ENCODE measurements at regions of chr4 and their contacts with region 1.

Region 1: GRCh38 chr4:15956179-15956850 is 6.7 kb downstream of the FGFBP2 start:
- DNase-seq: peak; percentile 5
- H3K4me3 ChIP-seq: no peak overlapping the region
- CTCF ChIP-seq: peak; percentile 94

Region 2: DNA sequence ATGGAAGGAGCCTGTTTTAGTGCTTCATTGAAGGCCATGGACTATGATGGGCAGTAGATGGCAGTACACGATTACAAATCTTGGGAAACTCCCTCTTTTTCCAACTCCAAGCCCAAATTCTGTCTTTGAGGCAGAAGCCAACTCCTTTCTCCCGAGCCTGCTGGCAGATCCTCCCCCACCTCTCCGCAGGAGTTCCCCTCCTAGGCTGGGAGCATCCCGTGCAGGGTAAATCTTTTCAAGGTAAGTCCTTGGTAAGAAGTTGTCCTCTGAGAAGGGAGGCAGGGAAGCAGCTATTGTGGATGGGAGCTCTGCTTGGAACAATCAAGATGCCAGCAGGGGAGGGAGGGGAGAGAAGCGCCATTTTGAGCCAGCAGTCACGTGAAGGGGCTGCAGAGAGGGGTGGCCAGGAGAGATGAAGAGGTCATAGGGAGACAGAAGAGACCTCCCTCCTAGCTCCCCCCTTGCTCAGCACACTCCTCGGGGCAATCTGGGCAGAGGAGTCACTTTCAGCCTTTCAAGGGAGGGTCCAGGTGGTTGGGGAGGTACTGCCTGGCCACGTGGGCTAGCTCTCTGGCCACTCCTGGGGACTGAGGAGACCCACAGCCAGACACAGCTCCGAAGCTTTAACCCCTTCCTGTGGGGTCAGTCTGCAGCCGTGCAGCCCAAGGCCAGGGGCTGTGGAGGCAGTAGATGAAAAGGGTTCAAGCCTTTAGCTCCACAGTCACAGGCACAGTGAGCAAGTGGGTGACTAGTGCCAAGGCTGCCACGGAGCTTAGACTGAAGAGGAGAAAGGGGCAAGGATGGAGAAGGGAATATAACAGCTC is 477.0 kb before region 1 on chr4:
- CTCF ChIA-PET with region 1: interaction called, 44 read pairs
- POLR2A ChIA-PET with region 1: interaction called, 3 read pairs
- DNase-seq: peak; percentile 42
- H3K4me3 ChIP-seq: peak overlapping the region; percentile 68
- CTCF ChIP-seq: peak; percentile 67

Region 3: DNA sequence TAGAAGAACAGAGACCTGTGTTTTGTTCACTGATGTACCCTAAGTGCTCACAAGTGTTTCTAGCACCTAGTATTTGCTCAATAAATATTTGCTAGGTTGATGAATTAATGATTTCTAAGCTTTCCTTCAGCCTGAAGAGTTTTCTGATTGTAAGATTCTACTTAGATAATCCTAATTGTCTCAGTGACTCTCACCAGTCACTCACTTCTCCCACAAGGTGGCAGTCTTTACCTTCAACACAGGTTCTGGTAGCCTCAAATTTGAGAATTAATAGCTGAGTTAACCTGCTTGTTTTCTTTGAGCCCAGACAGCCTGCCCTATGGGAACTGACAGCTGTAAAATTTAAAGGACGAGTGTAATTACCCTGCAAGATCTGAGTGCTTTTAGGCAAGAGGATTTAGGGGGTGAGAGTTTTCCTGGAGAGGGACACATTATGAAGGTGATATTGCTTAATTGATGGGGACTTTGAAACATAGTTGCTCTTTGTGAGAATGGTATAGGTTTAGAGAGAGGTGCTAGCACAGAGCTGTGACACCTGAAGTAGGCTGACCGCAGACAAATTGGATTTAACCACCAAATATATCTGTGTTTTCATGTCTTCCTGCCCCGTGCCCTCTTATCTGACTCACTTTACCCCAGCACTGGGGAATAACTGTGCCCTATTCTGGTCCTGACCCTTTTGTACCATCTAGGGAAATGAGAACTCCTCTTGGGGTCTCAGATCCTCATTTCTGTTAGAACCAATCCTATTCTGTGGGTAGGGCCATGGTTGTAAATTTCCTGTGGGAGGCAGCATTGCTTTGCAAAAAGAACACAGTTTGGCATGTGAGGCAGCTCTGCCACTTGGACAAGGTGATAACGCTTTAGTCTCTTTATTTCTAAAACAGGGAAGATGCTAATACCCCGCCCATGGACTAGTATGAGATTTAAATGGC is 150.5 kb before region 1 on chr4:
- CTCF ChIA-PET with region 1: interaction called, 115 read pairs
- POLR2A ChIA-PET with region 1: no interaction called
- DNase-seq: peak; percentile 4
- H3K4me3 ChIP-seq: no peak overlapping the region
- CTCF ChIP-seq: peak; percentile 64

Region 4: GRCh38 chr4:15868806-15869410 is 87.4 kb before region 1 on chr4:
- CTCF ChIA-PET with region 1: interaction called, 17 read pairs
- POLR2A ChIA-PET with region 1: no interaction called
- DNase-seq: no peak
- H3K4me3 ChIP-seq: no peak overlapping the region
- CTCF ChIP-seq: no peak

Region 5: DNA sequence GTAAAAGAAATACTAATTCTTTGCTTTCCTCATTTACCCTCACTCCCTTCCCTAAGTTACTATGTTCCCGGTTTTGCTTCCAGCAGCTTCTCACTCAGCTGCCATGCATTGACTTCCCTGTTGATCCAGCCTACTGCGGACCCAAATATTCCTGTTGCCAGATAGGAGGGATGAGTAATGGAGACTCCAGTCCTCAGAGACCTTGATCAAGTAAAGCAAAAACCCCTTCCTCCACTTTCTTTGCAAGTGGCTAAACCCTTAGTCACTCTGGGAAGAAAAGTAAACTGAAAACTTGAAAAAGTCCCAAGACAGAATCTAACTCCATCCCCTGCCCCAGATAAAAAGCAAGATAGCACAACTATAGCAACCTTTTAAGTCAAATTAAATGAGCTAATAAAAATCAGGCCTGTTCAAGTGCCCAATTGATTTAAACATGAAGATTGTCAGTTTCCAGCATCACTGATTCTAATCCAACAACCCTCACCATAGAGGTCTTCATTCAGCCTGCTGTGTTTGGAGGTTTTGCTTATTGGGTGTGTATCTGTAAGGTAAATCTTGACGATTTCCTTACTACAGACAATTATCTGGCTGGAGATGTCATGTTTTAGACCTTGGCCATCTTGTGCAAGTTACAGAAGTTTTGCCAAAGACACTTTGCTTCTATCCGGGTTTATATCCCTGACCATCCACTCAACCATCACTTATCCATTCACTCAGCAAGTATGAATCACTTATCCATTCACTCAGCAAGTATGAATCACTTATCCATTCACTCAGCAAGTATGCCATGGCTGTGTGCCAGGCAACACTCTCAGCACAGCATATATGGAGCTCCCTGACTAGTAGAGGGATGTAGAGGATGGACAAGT is 35.4 kb before region 1 on chr4:
- CTCF ChIA-PET with region 1: interaction called, 13 read pairs
- POLR2A ChIA-PET with region 1: no interaction called
- DNase-seq: peak; percentile 91
- H3K4me3 ChIP-seq: no peak overlapping the region; the same call in 1 of the 2 replicates
- CTCF ChIP-seq: no peak

Region 6: GRCh38 chr4:15938182-15938581 is 18.1 kb before region 1 on chr4:
- CTCF ChIA-PET with region 1: interaction called, 16 read pairs
- POLR2A ChIA-PET with region 1: no interaction called
- DNase-seq: no peak
- H3K4me3 ChIP-seq: no peak overlapping the region
- CTCF ChIP-seq: no peak

Region 7: GRCh38 chr4:16001484-16001858 is 45.2 kb after region 1 on chr4:
- CTCF ChIA-PET with region 1: interaction called, 96 read pairs
- POLR2A ChIA-PET with region 1: no interaction called
- DNase-seq: peak; percentile 14
- H3K4me3 ChIP-seq: no peak overlapping the region
- CTCF ChIP-seq: peak; percentile 87

Region 8: GRCh38 chr4:16969696-16970135 is 1013.4 kb after region 1 on chr4:
- CTCF ChIA-PET with region 1: no interaction called
- POLR2A ChIA-PET with region 1: no interaction called
- DNase-seq: no peak
- H3K4me3 ChIP-seq: no peak overlapping the region
- CTCF ChIP-seq: no peak